Left cardiac atrium (tissue), 4 donors: ENCODE measurements at regions of chr15 and their contacts with region 1.

Region 1: DNA sequence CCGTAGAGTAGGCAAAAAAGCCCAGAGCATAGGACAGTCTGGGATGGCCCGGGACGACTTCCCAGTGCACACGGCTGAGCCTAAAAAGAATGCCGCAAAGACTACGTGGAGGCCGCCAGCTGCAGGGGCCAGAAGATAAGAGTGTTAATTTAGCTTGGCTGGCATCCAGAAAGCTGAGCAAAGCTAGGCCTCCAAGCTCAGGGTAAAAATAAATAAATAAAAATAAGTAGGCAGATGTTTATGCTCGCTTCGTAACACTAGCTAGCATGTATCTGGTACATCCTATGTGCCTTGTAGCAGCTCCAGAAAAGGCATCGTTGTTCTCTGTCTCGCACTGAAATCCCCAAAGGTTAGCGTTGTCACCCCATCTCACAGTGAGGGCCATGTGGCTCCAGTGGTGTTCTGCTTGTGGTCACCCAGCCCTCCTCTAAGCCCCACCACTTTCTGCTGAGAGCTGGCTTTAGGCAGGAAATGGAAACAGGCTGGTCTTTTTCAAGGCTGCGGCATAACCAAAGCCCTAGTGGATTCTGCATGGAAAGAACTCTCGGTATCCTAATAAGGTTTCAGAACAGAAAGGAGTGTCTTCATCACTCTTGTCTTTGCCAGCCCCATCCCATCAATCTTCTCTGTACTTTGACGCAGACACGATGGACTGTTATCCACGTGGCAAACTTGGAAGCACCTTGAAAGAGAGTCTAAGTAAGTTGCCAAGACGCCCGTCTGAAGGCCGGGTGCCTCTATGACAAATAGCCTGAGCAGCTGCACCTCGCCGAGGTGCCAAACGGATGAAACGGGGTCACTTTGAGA is 58.1 kb upstream of the MEF2A start:
- DNase-seq: peak; percentile 76
- ATAC-seq: peak; percentile 84 to 85

Region 2: GRCh38 chr15:99409097-99409473 is 98.6 kb before region 1 on chr15:
- intact Hi-C with region 1: loop called in 1 of 2 experiments (anchors 10 kb)
- DNase-seq: peak; percentile 72
- ATAC-seq: peak; percentile 75 to 78

Region 3: GRCh38 chr15:99452774-99453636 is 54.7 kb before region 1 on chr15:
- intact Hi-C with region 1: loop called in 1 of 2 experiments (anchors 5 kb)
- DNase-seq: peak; percentile 95
- ATAC-seq: peak; percentile 33 to 55

Region 4: GRCh38 chr15:99704444-99704838 is 196.7 kb after region 1 on chr15:
- intact Hi-C with region 1: loop called in 1 of 2 experiments (anchors 10 kb)
- DNase-seq: no peak
- ATAC-seq: peak; percentile 74 to 76